ENCODE measurements at regions of chr2 and their contacts with region 1.

Region 1: GRCh38 chr2:43219383-43220228 is 6.8 kb downstream of the ZFP36L2 start:
- H3K4me3 ChIP-seq: peak overlapping the region; percentile 54
- H3K27ac ChIP-seq: peak overlapping the region; percentile 92
- H3K4me1 ChIP-seq: peaks cover 27% of the 10 kb centered on the region
- CTCF ChIP-seq: peak; percentile 75

Region 2: GRCh38 chr2:43127208-43127940 is 92.2 kb before region 1 on chr2:
- CTCF ChIA-PET with region 1: interaction called, 12 read pairs
- POLR2A ChIA-PET with region 1: interaction called, 5 read pairs
- H3K4me3 ChIP-seq: no peak overlapping the region
- H3K27ac ChIP-seq: no peak overlapping the region
- H3K4me1 ChIP-seq: no peaks in the 10 kb centered on the region
- CTCF ChIP-seq: 0 out of 2 replicates have a peak, but pooled peaks have one; percentile 55

Region 3: DNA sequence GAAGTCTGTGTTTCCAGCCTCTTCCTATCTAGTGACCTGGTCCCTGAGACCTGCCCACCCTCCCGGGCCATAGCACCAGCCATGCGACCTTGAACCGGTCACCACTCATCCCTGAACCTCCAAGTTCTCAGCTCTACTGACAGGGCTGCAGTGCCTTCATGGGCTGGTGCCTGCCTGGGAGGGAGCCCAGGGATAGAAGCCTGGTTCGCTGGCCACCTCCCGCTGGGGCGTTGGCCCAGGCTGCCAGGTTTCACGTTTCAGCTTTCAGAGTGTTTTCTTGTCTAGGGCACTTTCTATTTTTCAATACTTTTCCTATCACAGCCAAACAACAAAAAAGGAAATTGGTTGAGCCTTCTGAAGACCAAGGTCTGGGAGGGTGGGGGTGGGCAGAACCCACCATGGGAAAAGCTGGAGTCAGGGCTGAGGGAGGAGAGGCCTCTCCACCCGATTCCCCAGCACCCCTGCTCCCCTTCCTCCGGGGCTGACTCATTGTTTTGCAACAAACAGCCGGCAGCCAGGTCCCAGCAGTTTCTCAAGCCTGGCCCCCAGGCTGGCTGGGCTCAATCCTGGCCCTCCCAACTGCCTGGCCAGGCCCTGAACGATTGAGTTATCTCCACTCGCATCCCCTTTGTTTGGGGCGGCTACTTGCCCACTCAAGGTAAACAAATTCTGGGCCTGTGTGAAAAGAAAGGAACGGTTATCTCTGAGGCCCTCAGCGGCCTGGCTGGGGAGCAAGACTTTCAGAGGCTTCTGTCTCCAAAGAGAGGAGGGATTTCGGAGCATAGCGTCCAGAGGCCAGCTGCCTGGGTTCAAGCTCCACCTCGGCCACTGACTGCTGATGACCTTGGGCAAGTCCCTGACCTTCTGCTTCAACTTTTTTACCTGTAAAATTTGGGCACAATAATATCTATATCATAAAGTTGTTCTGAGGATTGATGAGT is 40.7 kb before region 1 on chr2:
- CTCF ChIA-PET with region 1: interaction called, 3 read pairs
- POLR2A ChIA-PET with region 1: interaction called, 10 read pairs
- H3K4me3 ChIP-seq: no peak overlapping the region
- H3K27ac ChIP-seq: peak overlapping the region; percentile 63
- H3K4me1 ChIP-seq: peaks cover 11% of the 10 kb centered on the region; the same call in 1 of the 2 replicates
- CTCF ChIP-seq: no peak

Region 4: DNA sequence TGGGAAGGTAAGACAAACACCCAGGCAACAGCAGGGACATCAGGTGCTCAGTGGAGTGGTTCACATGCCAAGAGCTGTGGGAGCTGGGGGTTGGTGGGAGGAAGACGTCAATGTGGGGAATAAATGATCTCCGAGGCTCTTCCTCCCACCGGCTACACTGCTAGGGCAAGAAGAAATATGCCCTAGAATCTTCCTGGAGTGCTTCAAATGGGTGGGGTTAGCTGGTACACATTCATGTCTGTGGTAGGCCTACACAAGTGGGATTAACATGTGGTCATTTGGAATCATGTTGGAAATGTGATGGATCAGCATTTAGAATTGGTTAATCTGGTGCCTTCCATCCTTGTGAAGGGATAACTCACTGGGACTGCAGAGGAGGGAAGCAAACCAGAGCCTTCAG is 19.2 kb after region 1 on chr2:
- CTCF ChIA-PET with region 1: no interaction called
- POLR2A ChIA-PET with region 1: no interaction called
- H3K4me3 ChIP-seq: no peak overlapping the region
- H3K27ac ChIP-seq: no peak overlapping the region
- H3K4me1 ChIP-seq: no peaks in the 10 kb centered on the region
- CTCF ChIP-seq: no peak

Region 5: GRCh38 chr2:43255296-43255910 is 35.8 kb after region 1 on chr2:
- CTCF ChIA-PET with region 1: no interaction called
- POLR2A ChIA-PET with region 1: no interaction called
- H3K4me3 ChIP-seq: no peak overlapping the region
- H3K27ac ChIP-seq: no peak overlapping the region
- H3K4me1 ChIP-seq: no peaks in the 10 kb centered on the region; the same call in 1 of the 2 replicates
- CTCF ChIP-seq: no peak

Region 6: DNA sequence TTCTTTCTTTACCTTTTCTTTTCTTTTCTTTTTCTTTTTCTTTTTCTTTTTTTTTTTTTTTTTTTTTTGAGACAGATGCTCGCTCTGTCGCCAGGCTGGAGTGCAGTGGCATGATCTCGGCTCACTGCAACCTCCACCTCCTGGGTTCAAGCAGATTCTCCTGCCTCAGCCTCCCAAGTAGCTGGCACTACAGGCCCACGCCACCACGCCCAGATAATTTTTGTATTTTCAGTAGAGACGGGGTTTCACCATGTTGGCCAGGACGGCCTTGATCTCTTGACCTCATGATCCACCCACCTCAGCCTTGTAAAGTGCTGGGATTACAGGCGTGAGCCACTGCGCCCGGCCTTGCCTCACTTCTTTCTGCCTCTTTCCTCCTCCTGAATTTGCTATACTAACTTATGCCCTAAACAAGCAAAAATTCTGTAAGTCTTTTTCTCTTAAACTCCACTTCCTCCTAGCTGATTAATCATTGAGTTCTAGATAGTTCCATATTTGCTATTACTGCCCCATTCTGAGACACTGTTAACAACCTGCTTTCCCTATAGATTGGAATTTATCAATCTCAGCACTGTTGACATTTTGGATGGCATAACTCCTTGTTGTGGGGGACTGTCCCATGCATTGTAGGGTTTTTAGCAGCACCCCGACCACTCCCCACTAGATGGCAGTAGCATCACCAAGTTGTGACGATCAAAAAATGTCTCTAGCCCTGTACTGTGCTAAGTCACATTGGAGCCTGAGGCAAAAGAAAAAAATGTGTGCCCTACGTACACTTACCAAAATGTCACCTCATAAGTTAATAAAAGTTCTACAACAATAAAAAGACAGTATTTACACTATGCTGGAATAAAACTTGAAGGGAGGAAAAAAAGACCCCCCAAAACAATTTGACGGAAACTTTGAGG is 392.6 kb after region 1 on chr2:
- CTCF ChIA-PET with region 1: no interaction called
- POLR2A ChIA-PET with region 1: no interaction called
- H3K4me3 ChIP-seq: no peak overlapping the region
- H3K27ac ChIP-seq: no peak overlapping the region
- H3K4me1 ChIP-seq: no peaks in the 10 kb centered on the region
- CTCF ChIP-seq: peak; percentile 73

Measured in HEK293 (cell line).